ENCODE measurements at regions of chr11 and their contacts with region 1.

Region 1: GRCh38 chr11:120108154-120108865 is 29.6 kb downstream of the TRIM29 start:
- DNase-seq: peak; percentile 67 to 91 (median 90)
- ATAC-seq: peak; percentile 97
- H3K4me3 ChIP-seq: no peak overlapping the region
- H3K27ac ChIP-seq: no peak overlapping the region
- H3K4me1 ChIP-seq: no peaks in the 10 kb centered on the region
- H3K27me3 ChIP-seq: peaks cover 3 to 52% of the 10 kb centered on the region in 2 experiments; a peak in 3 of 5 replicates
- CTCF ChIP-seq: peak; percentile 92 to 96 (median 96)
- EP300 ChIP-seq: no peak
- POLR2A ChIP-seq: no peak
- RAD21 ChIP-seq: peak; percentile 93 to 96

Region 2: GRCh38 chr11:119481021-119481666 is 627.2 kb before region 1 on chr11:
- CTCF ChIA-PET with region 1: no interaction called
- POLR2A ChIA-PET with region 1: no interaction called
- in situ Hi-C with region 1: no loop called
- intact Hi-C with region 1: loop called (anchors 5 kb)
- DNase-seq: peak; percentile 76 to 90 (median 88)
- ATAC-seq: peak; percentile 95
- H3K4me3 ChIP-seq: no peak overlapping the region
- H3K27ac ChIP-seq: no peak overlapping the region
- H3K4me1 ChIP-seq: peaks cover 12 to 27% of the 10 kb centered on the region in 2 experiments; a peak in 4 of 5 replicates
- H3K27me3 ChIP-seq: peaks cover 0 to 40% of the 10 kb centered on the region in 2 experiments; a peak in 2 of 5 replicates
- CTCF ChIP-seq: peak; percentile 96 to 97 (median 97)
- EP300 ChIP-seq: no peak
- POLR2A ChIP-seq: no peak
- RAD21 ChIP-seq: peak; percentile 95

Region 3: GRCh38 chr11:119491753-119492510 is 616.4 kb before region 1 on chr11:
- CTCF ChIA-PET with region 1: no interaction called
- POLR2A ChIA-PET with region 1: no interaction called
- in situ Hi-C with region 1: no loop called
- intact Hi-C with region 1: no loop called
- DNase-seq: peak in 2 of 4 experiments; percentile 28 to 33
- ATAC-seq: peak; percentile 47; the same call in 1 of the 3 replicates
- H3K4me3 ChIP-seq: no peak overlapping the region
- H3K27ac ChIP-seq: no peak overlapping the region
- H3K4me1 ChIP-seq: no peaks in the 10 kb centered on the region
- H3K27me3 ChIP-seq: peaks cover 6 to 72% of the 10 kb centered on the region in 2 experiments; a peak in 4 of 5 replicates
- CTCF ChIP-seq: peak; percentile 23 to 48 (median 34); a peak in 3 of 6 replicates
- EP300 ChIP-seq: no peak
- POLR2A ChIP-seq: no peak
- RAD21 ChIP-seq: peak; percentile 12 to 17; a peak in 2 of 4 replicates

Region 4: DNA sequence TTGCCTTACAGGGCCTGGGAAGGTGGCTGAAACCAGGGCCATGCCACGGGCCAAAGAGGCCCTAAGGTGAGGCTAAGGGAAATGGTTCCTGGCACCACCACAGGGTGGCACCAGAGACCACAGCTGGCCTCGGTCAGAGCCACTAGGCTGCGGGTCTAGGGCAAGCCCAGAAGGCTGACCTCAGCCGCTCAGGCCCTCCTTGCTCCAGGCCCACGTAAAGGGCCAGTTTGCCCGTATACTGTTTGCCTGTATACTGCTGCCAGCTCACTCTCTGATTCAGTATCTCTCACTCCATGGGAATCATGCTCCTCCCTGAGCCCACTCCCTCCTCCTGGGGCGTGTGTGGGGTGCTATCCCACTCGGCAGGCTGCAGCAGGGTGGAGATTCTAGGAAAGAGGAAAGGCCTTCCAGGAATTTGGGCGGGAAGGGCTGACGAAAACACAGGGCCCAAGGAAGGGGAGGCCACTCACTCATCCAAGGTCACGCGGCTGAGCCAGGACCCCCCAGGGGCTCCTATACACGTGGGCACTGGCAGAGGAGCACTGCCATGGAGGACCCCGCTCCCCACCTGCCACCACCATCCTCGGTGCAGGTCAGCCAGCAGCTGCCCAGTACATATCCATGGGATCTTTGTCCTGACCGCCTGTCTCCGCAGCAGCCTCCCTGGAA is 441.7 kb before region 1 on chr11:
- CTCF ChIA-PET with region 1: interaction called, 12 read pairs
- POLR2A ChIA-PET with region 1: interaction called, 3 read pairs
- in situ Hi-C with region 1: loop called (anchors 25 kb)
- intact Hi-C with region 1: loop called (anchors 1 kb)
- DNase-seq: peak; percentile 70 to 83 (median 78)
- ATAC-seq: peak; percentile 99
- H3K4me3 ChIP-seq: no peak overlapping the region
- H3K27ac ChIP-seq: no peak overlapping the region
- H3K4me1 ChIP-seq: peaks cover 4 to 12% of the 10 kb centered on the region in 2 experiments; a peak in 1 of 5 replicates
- H3K27me3 ChIP-seq: peaks cover 2 to 28% of the 10 kb centered on the region in 2 experiments; a peak in 4 of 5 replicates
- CTCF ChIP-seq: peak; percentile 88 to 91 (median 89)
- EP300 ChIP-seq: no peak
- POLR2A ChIP-seq: no peak
- RAD21 ChIP-seq: peak; percentile 81 to 93

Region 5: DNA sequence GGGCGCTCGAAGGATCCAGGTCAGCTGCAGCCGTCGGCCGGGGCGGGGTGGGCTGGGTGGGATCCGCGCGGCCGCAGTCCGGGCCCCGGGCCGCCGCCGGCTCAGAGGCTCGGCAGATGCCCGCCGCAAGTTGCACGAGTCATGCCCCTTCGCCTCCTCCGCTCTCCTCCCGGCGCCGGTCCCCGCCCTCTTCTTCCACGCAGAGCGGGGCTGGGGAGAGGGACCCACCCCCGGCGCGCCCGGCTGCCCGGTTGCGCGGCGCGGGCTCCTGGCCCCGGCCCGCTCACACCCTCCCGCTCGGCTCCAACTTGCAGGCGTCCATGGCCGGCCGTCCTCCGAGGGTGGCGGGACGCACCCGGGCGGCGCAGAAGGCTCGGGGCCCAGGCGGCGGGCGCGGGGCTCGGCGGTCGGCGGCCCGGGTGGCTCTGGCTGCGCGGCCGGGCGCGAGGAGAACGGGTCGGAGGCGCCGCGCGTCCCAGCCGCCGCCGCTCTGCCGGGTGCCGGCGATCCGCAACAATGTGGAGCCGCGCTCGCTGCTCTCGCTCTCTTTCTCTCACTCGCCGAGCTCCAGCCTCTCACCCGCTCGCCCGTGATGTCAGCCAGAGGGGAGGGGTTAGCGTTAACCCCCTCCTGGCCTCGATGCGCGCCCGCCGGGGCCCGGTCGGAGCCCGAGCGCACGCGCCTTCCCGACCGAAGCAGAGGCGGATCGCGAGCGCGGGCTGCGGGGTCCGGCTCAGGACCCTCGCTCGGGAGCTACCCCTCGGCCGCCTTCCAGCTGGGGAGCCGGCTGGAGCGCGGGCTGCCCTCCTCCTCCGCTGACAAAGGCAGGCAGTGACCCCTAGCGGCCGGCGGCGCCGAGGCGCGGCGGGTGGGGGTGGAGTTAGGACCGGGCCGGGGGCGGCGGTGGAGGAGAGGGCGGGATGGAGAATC is 379.4 kb before region 1 on chr11 and contains the start of gene NECTIN1:
- CTCF ChIA-PET with region 1: no interaction called
- POLR2A ChIA-PET with region 1: no interaction called
- in situ Hi-C with region 1: no loop called
- intact Hi-C with region 1: loop called (anchors 5 kb)
- DNase-seq: peak; percentile 79 to 93 (median 90)
- ATAC-seq: peak; percentile 99
- H3K4me3 ChIP-seq: peak within 1 kb of the TSS; percentile 54
- H3K27ac ChIP-seq: no peak within 1 kb of the TSS
- H3K4me1 ChIP-seq: peaks cover 0 to 25% of the 10 kb centered on the region in 2 experiments; a peak in 2 of 5 replicates
- H3K27me3 ChIP-seq: peaks cover 24 to 54% of the 10 kb centered on the region in 2 experiments; a peak in 3 of 5 replicates
- CTCF ChIP-seq: peak; percentile 73 to 84 (median 74)
- EP300 ChIP-seq: no peak
- POLR2A ChIP-seq: no peak
- RAD21 ChIP-seq: peak; percentile 65 to 83
- polyA plus RNA-seq, gene NECTIN1: 0.21 TPM in 1 of 2 experiments, not detected in the other

Region 6: GRCh38 chr11:119999220-119999619 is 109.1 kb before region 1 on chr11:
- CTCF ChIA-PET with region 1: no interaction called
- POLR2A ChIA-PET with region 1: no interaction called
- in situ Hi-C with region 1: no loop called
- intact Hi-C with region 1: loop called (anchors 2 kb)
- DNase-seq: peak in 2 of 4 experiments; percentile 12 to 17
- ATAC-seq: peak; percentile 74
- H3K4me3 ChIP-seq: no peak overlapping the region
- H3K27ac ChIP-seq: no peak overlapping the region
- H3K4me1 ChIP-seq: no peaks in the 10 kb centered on the region
- H3K27me3 ChIP-seq: no peaks in the 10 kb centered on the region
- CTCF ChIP-seq: peak; percentile 20 to 48 (median 23); a peak in 2 of 6 replicates
- EP300 ChIP-seq: no peak
- POLR2A ChIP-seq: no peak
- RAD21 ChIP-seq: peak in 1 of 2 experiments; percentile 19; a peak in 2 of 4 replicates

Region 7: DNA sequence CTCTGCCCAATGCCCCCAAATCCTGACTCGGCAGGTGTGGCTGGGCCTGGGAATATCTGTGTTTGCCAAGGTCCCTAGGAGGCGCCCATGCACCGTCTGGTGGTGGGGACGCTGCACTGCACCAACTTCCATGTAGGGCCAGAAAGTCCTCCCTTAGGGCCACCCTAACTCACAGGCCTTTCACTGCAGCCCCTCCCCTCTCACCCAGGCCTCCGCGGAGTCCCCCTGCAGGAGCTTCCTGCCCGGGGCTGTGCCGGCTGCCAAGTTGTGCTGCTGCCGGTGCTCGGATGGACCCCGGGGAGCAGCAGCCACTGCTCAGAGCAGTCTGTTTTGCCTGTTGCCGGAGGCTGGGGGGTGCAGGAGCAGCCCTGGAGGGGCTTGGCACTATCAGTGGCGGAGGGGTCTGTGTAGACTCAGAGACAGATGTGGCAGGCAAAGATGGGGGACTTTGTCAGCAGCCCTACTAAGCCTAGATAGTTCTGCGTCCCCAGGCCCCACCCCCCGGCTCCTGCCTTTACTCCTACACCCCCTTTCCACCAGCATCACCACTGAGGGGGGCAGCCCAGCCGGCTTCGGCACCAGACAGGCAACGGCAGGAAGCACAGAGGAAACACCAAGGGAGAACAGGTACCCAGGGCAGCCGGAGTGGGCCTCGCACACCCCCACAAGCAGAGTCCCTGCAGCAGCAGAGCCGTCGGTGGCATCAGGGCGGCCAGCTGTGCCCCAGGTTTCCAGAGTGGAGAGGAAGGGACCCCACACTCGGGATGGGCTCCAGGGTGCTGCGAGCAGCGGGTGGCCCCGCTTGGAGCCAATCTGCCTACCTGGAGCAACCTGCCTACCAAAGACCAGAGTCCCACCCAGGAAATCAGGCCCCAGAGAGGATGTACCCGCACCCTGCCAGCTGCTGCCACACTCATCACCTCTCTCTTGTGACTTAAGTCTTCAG is 94.7 kb before region 1 on chr11:
- CTCF ChIA-PET with region 1: interaction called, 8 read pairs
- POLR2A ChIA-PET with region 1: no interaction called
- in situ Hi-C with region 1: no loop called
- intact Hi-C with region 1: loop called (anchors 5 kb)
- DNase-seq: peak; percentile 51 to 74 (median 70)
- ATAC-seq: peak; percentile 98
- H3K4me3 ChIP-seq: no peak overlapping the region
- H3K27ac ChIP-seq: no peak overlapping the region
- H3K4me1 ChIP-seq: peaks cover 0 to 7% of the 10 kb centered on the region in 2 experiments; a peak in 1 of 5 replicates
- H3K27me3 ChIP-seq: peaks cover 4 to 56% of the 10 kb centered on the region in 2 experiments; a peak in 4 of 5 replicates
- CTCF ChIP-seq: peak; percentile 72 to 86 (median 76)
- EP300 ChIP-seq: no peak
- POLR2A ChIP-seq: no peak
- RAD21 ChIP-seq: peak; percentile 56 to 75

Region 8: GRCh38 chr11:120172054-120172911 is 64.0 kb after region 1 on chr11:
- CTCF ChIA-PET with region 1: no interaction called
- POLR2A ChIA-PET with region 1: no interaction called
- in situ Hi-C with region 1: no loop called
- intact Hi-C with region 1: loop called (anchors 1 kb)
- DNase-seq: peak; percentile 61 to 78 (median 72)
- ATAC-seq: peak; percentile 80
- H3K4me3 ChIP-seq: no peak overlapping the region
- H3K27ac ChIP-seq: no peak overlapping the region
- H3K4me1 ChIP-seq: peaks cover 0 to 18% of the 10 kb centered on the region in 2 experiments; a peak in 2 of 5 replicates
- H3K27me3 ChIP-seq: peaks cover 28 to 71% of the 10 kb centered on the region in 2 experiments; a peak in 4 of 5 replicates
- CTCF ChIP-seq: peak; percentile 87 to 89 (median 87)
- EP300 ChIP-seq: no peak
- POLR2A ChIP-seq: no peak
- RAD21 ChIP-seq: peak; percentile 88 to 94

Measured in K562 (cell line).